K562 (cell line): ENCODE measurements at regions of chr4 and their contacts with region 1.

Region 1: GRCh38 chr4:3047464-3048286 is 26.7 kb downstream of the HTT-AS start:
- DNase-seq: peak; percentile 44 to 80 (median 52)
- ATAC-seq: peak; percentile 92
- H3K4me3 ChIP-seq: no peak overlapping the region
- H3K27ac ChIP-seq: no peak overlapping the region
- H3K4me1 ChIP-seq: peaks cover 0 to 3% of the 10 kb centered on the region in 2 experiments; a peak in 4 of 5 replicates
- H3K27me3 ChIP-seq: peaks cover 7 to 12% of the 10 kb centered on the region in 2 experiments; a peak in 4 of 5 replicates
- CTCF ChIP-seq: peak; percentile 81 to 83 (median 83)
- EP300 ChIP-seq: no peak
- POLR2A ChIP-seq: no peak
- RAD21 ChIP-seq: peak; percentile 64 to 87

Region 2: DNA sequence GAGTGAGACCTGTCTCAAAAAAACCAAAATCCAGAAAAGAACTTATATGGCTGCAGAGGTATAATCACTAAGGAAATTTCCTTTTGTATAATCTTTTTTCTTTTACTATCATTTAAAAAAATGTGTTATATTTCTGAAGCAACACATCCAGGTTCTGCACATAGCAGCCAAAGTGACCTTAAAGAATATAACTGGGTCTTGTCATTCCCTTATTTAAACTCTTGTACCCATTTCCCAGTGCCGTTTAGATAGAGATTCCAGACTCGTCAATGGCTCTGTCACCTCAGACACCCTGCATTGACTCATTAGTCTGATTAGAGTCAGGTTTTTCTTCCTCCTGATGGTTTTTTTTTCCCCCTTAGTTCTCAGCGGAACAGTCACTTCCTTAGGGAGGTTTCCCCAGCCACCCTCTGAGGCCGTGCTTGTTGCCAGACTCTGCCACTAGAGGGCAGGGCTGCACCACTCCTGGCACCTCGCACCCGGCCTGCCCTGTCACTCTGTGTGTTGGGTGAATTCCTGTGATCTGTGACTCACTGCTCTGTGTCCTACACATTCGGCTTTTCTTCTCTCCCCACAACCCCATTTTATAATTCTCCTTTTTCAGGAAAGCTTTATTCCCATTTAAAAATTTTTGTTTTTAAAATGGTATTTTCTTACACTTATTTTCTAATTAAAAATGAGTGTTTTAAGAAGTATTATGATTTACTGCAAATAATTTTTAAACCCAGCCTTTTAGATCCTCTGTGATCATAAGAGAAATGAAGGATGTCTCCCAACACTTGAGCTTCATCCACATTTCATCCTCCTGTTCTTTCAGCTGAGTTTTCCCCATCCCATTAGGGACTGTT is 58.9 kb after region 1 on chr4:
- CTCF ChIA-PET with region 1: no interaction called
- POLR2A ChIA-PET with region 1: no interaction called
- in situ Hi-C with region 1: no loop called
- intact Hi-C with region 1: loop called (anchors 1 kb)
- DNase-seq: peak; percentile 85 to 88 (median 87)
- ATAC-seq: peak; percentile 100
- H3K4me3 ChIP-seq: no peak overlapping the region
- H3K27ac ChIP-seq: no peak overlapping the region
- H3K4me1 ChIP-seq: no peaks in the 10 kb centered on the region; a peak in 1 of 5 replicates
- H3K27me3 ChIP-seq: no peaks in the 10 kb centered on the region
- CTCF ChIP-seq: peak; percentile 91 to 98 (median 97)
- EP300 ChIP-seq: 0 out of 2 replicates have a peak, but pooled peaks have one; percentile 7
- POLR2A ChIP-seq: no peak
- RAD21 ChIP-seq: peak; percentile 83 to 92

Region 3: DNA sequence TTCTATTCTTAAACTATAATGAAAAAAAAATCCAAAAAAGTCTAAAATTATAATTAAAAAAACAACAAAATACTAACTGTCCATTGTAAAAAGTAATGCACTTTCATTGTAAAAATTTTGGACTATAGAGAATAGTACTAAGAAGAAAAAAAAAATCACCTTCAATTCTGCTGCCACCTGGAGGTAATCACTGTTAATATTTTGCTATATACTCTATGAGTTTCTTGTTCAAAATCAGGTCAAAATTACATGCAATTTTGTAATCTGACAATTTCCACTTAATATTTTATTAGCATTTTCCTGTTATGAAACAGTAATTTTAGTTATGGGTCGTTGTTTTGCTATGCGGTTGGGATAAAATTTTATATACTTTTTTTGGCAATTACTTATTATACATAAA is 88.8 kb after region 1 on chr4:
- CTCF ChIA-PET with region 1: interaction called, 4 read pairs
- POLR2A ChIA-PET with region 1: no interaction called
- in situ Hi-C with region 1: no loop called
- intact Hi-C with region 1: loop called (anchors 10 kb)
- DNase-seq: no peak
- ATAC-seq: no peak
- H3K4me3 ChIP-seq: no peak overlapping the region
- H3K27ac ChIP-seq: no peak overlapping the region
- H3K4me1 ChIP-seq: no peaks in the 10 kb centered on the region
- H3K27me3 ChIP-seq: no peaks in the 10 kb centered on the region
- CTCF ChIP-seq: peak in 2 of 3 experiments; percentile 3 to 39; a peak in 3 of 6 replicates
- EP300 ChIP-seq: no peak
- POLR2A ChIP-seq: no peak
- RAD21 ChIP-seq: 0 out of 4 replicates have a peak, but pooled peaks of 1 of the 2 experiments have one; percentile 10